Ascending aorta (tissue), 2 donors: ENCODE measurements at regions of chr14 and their contacts with region 1.

Region 1: GRCh38 chr14:45267071-45267470 is 14.1 kb upstream of the MIS18BP1 start:
- DNase-seq: no peak
- H3K4me3 ChIP-seq: no peak overlapping the region
- H3K27ac ChIP-seq: peak overlapping the region in 1 of 2 donors; percentile 22
- H3K4me1 ChIP-seq: no peaks in the 10 kb centered on the region
- H3K27me3 ChIP-seq: no peaks in the 10 kb centered on the region
- CTCF ChIP-seq: no peak

Region 2: GRCh38 chr14:44912041-44912869 is 354.8 kb before region 1 on chr14:
- intact Hi-C with region 1: loop called (anchors 5 kb)
- DNase-seq: no peak
- H3K4me3 ChIP-seq: peak overlapping the region; percentile 56 to 77
- H3K27ac ChIP-seq: no peak overlapping the region
- H3K4me1 ChIP-seq: peaks cover 0 to 6% of the 10 kb centered on the region in 2 donors
- H3K27me3 ChIP-seq: no peaks in the 10 kb centered on the region
- CTCF ChIP-seq: no peak